Left lung (tissue), 14 donors: ENCODE measurements at regions of chr5 and their contacts with region 1.

Region 1: GRCh38 chr5:72290356-72291133 is 29.5 kb downstream of the MRPS27 start:
- DNase-seq: no peak
- ATAC-seq: no peak
- H3K4me3 ChIP-seq: no peak overlapping the region
- H3K27ac ChIP-seq: no peak overlapping the region
- H3K4me1 ChIP-seq: peaks cover 0 to 5% of the 10 kb centered on the region in 2 donors
- H3K27me3 ChIP-seq: no peaks in the 10 kb centered on the region
- CTCF ChIP-seq: no peak

Region 2: DNA sequence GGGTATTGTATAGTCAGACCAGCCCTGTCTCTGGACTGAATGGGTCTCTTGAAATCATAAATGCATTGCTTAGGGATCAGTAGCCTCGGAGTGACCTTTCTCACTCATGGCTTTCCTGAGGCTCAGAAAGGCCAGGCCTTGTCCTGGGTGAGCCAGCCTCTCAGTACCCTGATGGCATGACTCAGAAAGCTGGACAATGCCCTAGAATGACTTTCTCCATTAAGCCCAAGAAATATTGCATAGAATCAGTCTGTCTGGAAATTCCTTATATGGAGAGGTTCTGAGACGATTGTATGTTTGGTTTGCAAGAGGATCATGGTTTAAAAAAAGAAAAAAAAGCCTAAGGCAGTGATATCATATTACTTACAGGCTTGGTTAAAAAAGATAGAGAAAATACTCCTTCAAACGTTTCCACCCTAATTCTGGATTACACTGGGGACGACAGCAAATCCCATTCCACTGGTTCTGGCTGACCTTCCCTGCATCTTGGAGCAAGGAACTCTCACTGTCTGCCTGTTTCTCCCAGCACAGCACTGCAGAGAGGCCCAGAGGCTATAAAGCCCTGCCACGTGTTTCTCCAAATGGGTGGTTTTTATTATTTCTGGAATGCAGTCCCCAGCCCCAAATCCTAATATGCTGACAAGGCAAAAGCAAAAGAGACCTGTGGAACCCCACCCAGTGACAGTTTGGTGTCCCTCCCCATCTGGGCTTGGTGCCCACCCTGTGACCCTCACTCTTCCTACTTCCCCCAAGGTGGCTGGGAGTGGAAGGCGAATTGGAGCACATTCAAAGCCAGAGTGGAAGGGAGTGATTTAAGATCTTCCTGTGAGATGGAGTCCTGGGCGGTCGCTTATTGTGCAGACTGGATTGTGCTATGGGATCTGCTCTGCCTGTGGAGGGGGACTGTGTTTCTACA is 148.8 kb before region 1 on chr5:
- intact Hi-C with region 1: loop called in 1 of 2 experiments (anchors 10 kb)
- DNase-seq: no peak
- ATAC-seq: peak; percentile 33
- H3K4me3 ChIP-seq: no peak overlapping the region
- H3K27ac ChIP-seq: peak overlapping the region in 1 of 2 donors; percentile 47
- H3K4me1 ChIP-seq: no peaks in the 10 kb centered on the region
- H3K27me3 ChIP-seq: no peaks in the 10 kb centered on the region
- CTCF ChIP-seq: no peak

Region 3: GRCh38 chr5:72518001-72518683 is 227.6 kb after region 1 on chr5:
- intact Hi-C with region 1: no loop called
- DNase-seq: peak in 2 of 4 donors; percentile 55 to 73
- ATAC-seq: peak; percentile 79
- H3K4me3 ChIP-seq: no peak overlapping the region
- H3K27ac ChIP-seq: peak overlapping the region; percentile 46 to 60
- H3K4me1 ChIP-seq: peaks cover 0 to 17% of the 10 kb centered on the region in 2 donors
- H3K27me3 ChIP-seq: no peaks in the 10 kb centered on the region
- CTCF ChIP-seq: no peak